ENCODE measurements at regions of chr6 and their contacts with region 1.

Region 1: GRCh38 chr6:105087571-105088211 is 92.1 kb downstream of the POPDC3 start:
- DNase-seq: peak in 1 of 2 donors; percentile 22
- ATAC-seq: peak; percentile 72

Region 2: DNA sequence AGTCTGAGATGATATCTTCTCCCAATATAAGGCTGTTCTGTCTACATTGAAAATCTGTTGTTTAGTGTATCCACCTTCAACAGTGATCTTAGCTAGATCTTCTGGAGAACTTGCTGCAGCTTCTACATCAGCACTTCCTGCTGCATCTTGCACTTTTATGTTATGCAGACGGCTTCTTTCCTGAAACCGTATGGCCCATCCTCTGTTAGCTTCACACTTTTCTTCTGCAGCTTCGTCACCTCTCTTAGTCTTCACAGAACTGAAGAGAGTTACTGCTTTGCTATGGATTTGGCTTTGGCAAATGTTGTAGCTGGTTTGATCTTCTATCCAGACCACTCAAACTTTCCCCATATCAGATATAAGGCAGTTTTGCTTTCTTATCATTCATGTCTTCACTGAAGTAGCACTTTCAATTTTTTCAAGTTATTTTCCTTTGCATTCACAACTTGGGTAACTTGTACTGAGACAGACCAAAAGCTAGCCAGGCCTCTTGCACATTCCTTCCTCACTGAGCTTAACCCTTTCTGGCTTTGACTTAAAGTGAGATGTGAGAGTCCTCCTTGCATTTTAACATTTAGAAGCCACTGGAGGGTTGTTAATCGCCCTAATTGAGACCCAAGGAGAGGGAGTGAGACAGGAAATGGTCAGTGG is 205.1 kb after region 1 on chr6:
- intact Hi-C with region 1: no loop called
- DNase-seq: no peak
- ATAC-seq: no peak

Region 3: GRCh38 chr6:105431226-105431625 is 343.5 kb after region 1 on chr6:
- intact Hi-C with region 1: loop called in 1 of 2 experiments (anchors 5 kb)
- DNase-seq: no peak
- ATAC-seq: no peak

Region 4: DNA sequence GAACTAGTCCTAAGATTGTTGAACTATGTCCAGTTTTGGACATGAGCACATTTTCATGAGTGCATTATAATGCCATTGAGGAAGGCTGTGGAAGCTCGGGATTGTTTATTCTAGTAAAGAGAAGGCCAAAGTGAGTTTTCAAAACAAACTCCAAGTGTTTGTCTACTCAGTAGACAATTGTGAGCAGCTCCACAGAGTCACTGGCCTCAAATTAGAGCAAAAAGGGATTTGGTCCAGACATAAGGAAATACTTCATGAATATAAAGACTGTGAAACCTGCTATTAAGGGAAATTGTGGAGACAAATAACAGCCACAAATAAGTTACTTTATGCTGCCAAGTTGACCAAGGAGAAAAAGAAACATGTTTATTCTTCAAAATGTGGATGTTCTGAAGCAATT is 357.8 kb after region 1 on chr6:
- intact Hi-C with region 1: no loop called
- DNase-seq: no peak
- ATAC-seq: no peak

Measured in left colon (tissue), 2 donors.